CD8-positive, alpha-beta T cell (primary cell): ENCODE measurements at regions of chr11 and their contacts with region 1.

Region 1: GRCh38 chr11:15650105-15650938 is 535.6 kb downstream of the INSC start:
- DNase-seq: peak; percentile 30 to 66 (median 53)
- ATAC-seq: peak; percentile 87
- H3K4me3 ChIP-seq: peak overlapping the region in 1 of 2 experiments; percentile 35
- H3K4me3 Mint-ChIP-seq: no peak overlapping the region
- H3K27ac ChIP-seq: no peak overlapping the region
- H3K27ac Mint-ChIP-seq: no peak overlapping the region
- H3K4me1 ChIP-seq: peaks cover 7% of the 10 kb centered on the region
- H3K4me1 Mint-ChIP-seq: peaks cover 2% of the 10 kb centered on the region
- H3K27me3 ChIP-seq: peaks cover 4 to 9% of the 10 kb centered on the region in 2 experiments
- H3K27me3 Mint-ChIP-seq: peaks cover 15% of the 10 kb centered on the region
- CTCF ChIP-seq: peak; percentile 62

Region 2: GRCh38 chr11:15569305-15570025 is 80.9 kb before region 1 on chr11:
- CTCF ChIA-PET with region 1: no interaction called
- POLR2A ChIA-PET with region 1: no interaction called
- intact Hi-C with region 1: no loop called
- DNase-seq: no peak
- ATAC-seq: no peak
- H3K4me3 ChIP-seq: no peak overlapping the region
- H3K4me3 Mint-ChIP-seq: no peak overlapping the region
- H3K27ac ChIP-seq: no peak overlapping the region
- H3K27ac Mint-ChIP-seq: no peak overlapping the region
- H3K4me1 ChIP-seq: no peaks in the 10 kb centered on the region
- H3K4me1 Mint-ChIP-seq: no peaks in the 10 kb centered on the region
- H3K27me3 ChIP-seq: no peaks in the 10 kb centered on the region
- H3K27me3 Mint-ChIP-seq: peaks cover 2% of the 10 kb centered on the region
- CTCF ChIP-seq: no peak

Region 3: GRCh38 chr11:16605894-16606783 is 955.8 kb after region 1 on chr11:
- CTCF ChIA-PET with region 1: no interaction called
- POLR2A ChIA-PET with region 1: no interaction called
- intact Hi-C with region 1: loop called (anchors 5 kb)
- DNase-seq: peak; percentile 63 to 83 (median 76)
- ATAC-seq: peak; percentile 92
- H3K4me3 ChIP-seq: peak overlapping the region; percentile 22 to 38
- H3K4me3 Mint-ChIP-seq: peak overlapping the region; percentile 76
- H3K27ac ChIP-seq: no peak overlapping the region
- H3K27ac Mint-ChIP-seq: peak overlapping the region; percentile 37
- H3K4me1 ChIP-seq: peaks cover 35% of the 10 kb centered on the region
- H3K4me1 Mint-ChIP-seq: peaks cover 28% of the 10 kb centered on the region
- H3K27me3 ChIP-seq: peaks cover 32 to 52% of the 10 kb centered on the region in 2 experiments
- H3K27me3 Mint-ChIP-seq: peaks cover 48% of the 10 kb centered on the region
- CTCF ChIP-seq: peak; percentile 79